WTC11 (cell line): ENCODE measurements at regions of chr11 and their contacts with region 1.

Region 1: GRCh38 chr11:6757373-6757967 is 14.3 kb downstream of the OR2AG2 start:
- DNase-seq: peak; percentile 52
- ATAC-seq: peak; percentile 94
- H3K4me3 Mint-ChIP-seq: no peak overlapping the region
- H3K27ac Mint-ChIP-seq: no peak overlapping the region
- H3K4me1 Mint-ChIP-seq: no peaks in the 10 kb centered on the region
- H3K27me3 Mint-ChIP-seq: no peaks in the 10 kb centered on the region; the same call in 1 of the 2 replicates
- CTCF ChIP-seq: no peak

Region 2: DNA sequence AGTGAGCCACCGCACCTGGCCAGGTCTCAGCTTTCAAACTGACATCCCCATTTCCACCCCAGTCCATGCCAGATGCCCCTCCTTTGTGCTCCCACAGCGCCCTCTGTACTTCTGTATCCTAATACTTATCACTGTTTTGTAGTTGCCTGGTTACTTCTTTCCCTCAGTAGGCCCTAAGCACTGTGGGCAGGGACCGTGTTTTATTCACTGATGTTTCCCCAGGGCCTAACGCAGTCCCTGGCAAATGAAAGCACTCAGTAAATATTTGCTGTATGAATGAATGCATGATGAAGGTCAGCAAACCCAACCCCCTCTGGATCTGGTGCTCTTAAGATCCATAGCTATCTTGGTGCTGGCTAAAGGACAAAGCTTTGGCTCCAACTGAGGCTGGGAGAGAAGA is 281.5 kb before region 1 on chr11:
- CTCF ChIA-PET with region 1: no interaction called
- POLR2A ChIA-PET with region 1: no interaction called
- DNase-seq: peak; percentile 49
- ATAC-seq: peak; percentile 14
- H3K4me3 Mint-ChIP-seq: 0 out of 2 replicates have a peak overlapping the region, but pooled peaks have one; percentile 37
- H3K27ac Mint-ChIP-seq: peak overlapping the region; percentile 71; the same call in 1 of the 2 replicates
- H3K4me1 Mint-ChIP-seq: peaks cover 38% of the 10 kb centered on the region
- H3K27me3 Mint-ChIP-seq: peaks cover 12% of the 10 kb centered on the region
- CTCF ChIP-seq: no peak

Region 3: DNA sequence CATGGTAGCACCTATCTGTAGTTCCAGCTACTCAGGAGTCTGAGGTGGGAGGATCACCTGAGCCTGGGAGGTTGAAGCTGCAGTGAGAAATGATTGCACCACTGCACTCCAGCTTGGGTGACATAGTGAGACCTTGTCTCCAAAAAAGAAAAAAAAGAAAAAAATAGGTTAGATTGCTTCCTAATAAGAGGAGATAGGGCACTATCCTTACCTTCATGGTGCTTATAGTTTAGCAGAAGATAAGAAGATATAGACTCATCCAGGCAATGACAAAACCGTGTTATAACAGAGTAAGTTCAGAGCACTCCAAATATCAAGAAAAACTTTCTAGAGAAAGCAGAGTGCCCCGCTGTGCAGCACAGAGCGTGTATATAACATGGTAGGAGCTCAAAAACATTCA is 196.2 kb before region 1 on chr11:
- CTCF ChIA-PET with region 1: no interaction called
- POLR2A ChIA-PET with region 1: no interaction called
- DNase-seq: no peak
- ATAC-seq: no peak
- H3K4me3 Mint-ChIP-seq: no peak overlapping the region
- H3K27ac Mint-ChIP-seq: no peak overlapping the region
- H3K4me1 Mint-ChIP-seq: peaks cover 11% of the 10 kb centered on the region
- H3K27me3 Mint-ChIP-seq: no peaks in the 10 kb centered on the region
- CTCF ChIP-seq: no peak

Region 4: GRCh38 chr11:6705905-6706535 is 51.5 kb before region 1 on chr11:
- CTCF ChIA-PET with region 1: interaction called, 32 read pairs
- POLR2A ChIA-PET with region 1: no interaction called
- DNase-seq: peak; percentile 44
- ATAC-seq: peak; percentile 68
- H3K4me3 Mint-ChIP-seq: no peak overlapping the region
- H3K27ac Mint-ChIP-seq: no peak overlapping the region
- H3K4me1 Mint-ChIP-seq: peaks cover 16% of the 10 kb centered on the region
- H3K27me3 Mint-ChIP-seq: peaks cover 8% of the 10 kb centered on the region; the same call in 1 of the 2 replicates
- CTCF ChIP-seq: peak; percentile 69

Region 5: GRCh38 chr11:6721343-6721742 is 36.1 kb before region 1 on chr11:
- CTCF ChIA-PET with region 1: interaction called, 10 read pairs
- POLR2A ChIA-PET with region 1: no interaction called
- DNase-seq: no peak
- ATAC-seq: no peak
- H3K4me3 Mint-ChIP-seq: no peak overlapping the region
- H3K27ac Mint-ChIP-seq: no peak overlapping the region
- H3K4me1 Mint-ChIP-seq: no peaks in the 10 kb centered on the region
- H3K27me3 Mint-ChIP-seq: peaks cover 31% of the 10 kb centered on the region
- CTCF ChIP-seq: no peak

Region 6: DNA sequence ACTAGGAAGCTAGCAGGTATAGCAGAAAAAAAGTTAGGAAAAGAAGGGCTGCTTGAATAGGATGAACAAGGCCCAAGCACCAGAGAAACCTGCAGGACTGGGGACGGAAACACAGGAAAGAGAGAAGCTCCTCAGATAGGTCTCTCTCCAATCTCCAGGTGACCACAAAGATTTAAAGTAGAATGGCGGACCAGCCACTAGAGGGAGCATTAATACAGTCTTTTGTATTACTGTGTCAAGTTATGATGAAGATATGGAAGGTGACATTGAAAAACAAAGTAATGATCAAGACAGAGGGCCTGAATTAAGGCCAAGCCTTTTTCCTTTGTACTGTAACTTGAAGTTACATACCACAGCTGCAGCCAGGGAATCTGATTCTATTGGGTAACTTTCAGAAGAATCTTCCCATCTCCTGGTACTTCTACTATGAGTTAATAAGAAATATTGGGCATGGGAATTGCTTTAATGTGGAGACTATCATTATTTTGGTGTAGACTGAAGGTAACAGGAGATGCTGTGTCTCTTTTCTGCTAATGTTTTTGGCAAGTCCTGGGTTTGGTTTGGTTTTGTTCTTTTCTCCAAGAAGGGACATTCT is 19.5 kb before region 1 on chr11:
- CTCF ChIA-PET with region 1: interaction called, 30 read pairs
- POLR2A ChIA-PET with region 1: no interaction called
- DNase-seq: peak; percentile 28
- ATAC-seq: peak; percentile 89
- H3K4me3 Mint-ChIP-seq: no peak overlapping the region
- H3K27ac Mint-ChIP-seq: no peak overlapping the region
- H3K4me1 Mint-ChIP-seq: no peaks in the 10 kb centered on the region
- H3K27me3 Mint-ChIP-seq: no peaks in the 10 kb centered on the region; the same call in 1 of the 2 replicates
- CTCF ChIP-seq: peak; percentile 30; the same call in 1 of the 2 replicates

Region 7: GRCh38 chr11:6746086-6746618 is 11.3 kb before region 1 on chr11:
- CTCF ChIA-PET with region 1: interaction called, 55 read pairs
- POLR2A ChIA-PET with region 1: no interaction called
- DNase-seq: no peak
- ATAC-seq: no peak; the same call in 1 of the 2 replicates
- H3K4me3 Mint-ChIP-seq: no peak overlapping the region
- H3K27ac Mint-ChIP-seq: no peak overlapping the region
- H3K4me1 Mint-ChIP-seq: no peaks in the 10 kb centered on the region
- H3K27me3 Mint-ChIP-seq: peaks cover 2% of the 10 kb centered on the region; the same call in 1 of the 2 replicates
- CTCF ChIP-seq: no peak

Region 8: GRCh38 chr11:6771926-6772893 is 14.7 kb after region 1 on chr11 and contains the start of gene OR2AG2:
- CTCF ChIA-PET with region 1: interaction called, 17 read pairs
- POLR2A ChIA-PET with region 1: no interaction called
- DNase-seq: no peak
- ATAC-seq: no peak
- H3K4me3 Mint-ChIP-seq: no peak within 1 kb of the TSS
- H3K27ac Mint-ChIP-seq: no peak within 1 kb of the TSS
- H3K4me1 Mint-ChIP-seq: no peaks in the 10 kb centered on the region
- H3K27me3 Mint-ChIP-seq: peaks cover 2% of the 10 kb centered on the region; the same call in 1 of the 2 replicates
- CTCF ChIP-seq: no peak
- total RNA-seq, gene OR2AG2: 0.09 to 0.21 TPM (median 0.17 TPM) in 3 replicates

Region 9: DNA sequence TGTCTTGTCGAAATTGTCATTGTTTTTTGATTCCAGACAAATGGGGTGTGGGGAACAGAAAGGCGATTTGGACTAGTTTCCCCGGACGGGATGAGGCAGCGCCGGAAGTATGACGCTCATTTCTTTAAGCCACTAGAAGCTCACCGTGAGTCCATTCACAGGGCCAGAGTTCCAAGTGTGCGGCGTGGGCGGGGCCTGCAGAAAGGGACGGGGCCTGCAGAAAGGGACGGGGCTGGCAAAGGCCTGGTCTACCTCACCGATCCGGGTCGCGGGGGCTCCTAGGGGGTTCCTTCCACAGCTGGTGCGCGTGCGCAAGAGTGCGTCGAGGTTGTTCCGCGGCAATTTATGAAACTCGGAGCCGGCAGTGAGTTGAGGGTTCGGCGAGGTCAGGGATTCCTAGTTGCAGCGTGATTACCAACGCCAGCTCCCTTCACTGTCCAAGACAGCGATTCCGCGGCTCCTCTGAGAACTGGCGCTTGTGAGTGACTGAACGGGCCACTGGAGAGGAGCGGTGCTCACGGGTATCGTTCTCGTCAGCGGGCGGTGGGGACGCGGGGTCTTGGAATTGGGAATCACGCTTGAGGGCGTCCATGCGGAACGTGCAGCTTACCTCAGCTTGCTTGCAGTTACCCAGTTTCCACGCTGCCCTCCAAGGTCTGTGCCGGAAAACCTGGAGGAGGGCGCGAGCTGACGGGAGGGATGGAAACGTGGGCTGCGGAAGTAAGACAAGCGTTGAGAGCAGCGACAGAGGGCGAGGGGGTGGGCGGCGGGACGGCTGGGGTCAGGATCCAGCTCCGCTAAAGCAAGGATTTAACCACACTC is 168.9 kb after region 1 on chr11 and contains the start of gene ZNF215:
- CTCF ChIA-PET with region 1: interaction called, 14 read pairs
- POLR2A ChIA-PET with region 1: no interaction called
- DNase-seq: peak; percentile 89
- ATAC-seq: peak; percentile 94
- H3K4me3 Mint-ChIP-seq: peak within 1 kb of the TSS; percentile 99
- H3K27ac Mint-ChIP-seq: peak within 1 kb of the TSS; percentile 96
- H3K4me1 Mint-ChIP-seq: peaks cover 36% of the 10 kb centered on the region
- H3K27me3 Mint-ChIP-seq: no peaks in the 10 kb centered on the region; the same call in 1 of the 2 replicates
- CTCF ChIP-seq: no peak
- total RNA-seq, gene ZNF215: 13.8 to 15.8 TPM (median 14.1 TPM) in 3 replicates